ENCODE measurements at regions of chrX and their contacts with region 1.

Region 1: DNA sequence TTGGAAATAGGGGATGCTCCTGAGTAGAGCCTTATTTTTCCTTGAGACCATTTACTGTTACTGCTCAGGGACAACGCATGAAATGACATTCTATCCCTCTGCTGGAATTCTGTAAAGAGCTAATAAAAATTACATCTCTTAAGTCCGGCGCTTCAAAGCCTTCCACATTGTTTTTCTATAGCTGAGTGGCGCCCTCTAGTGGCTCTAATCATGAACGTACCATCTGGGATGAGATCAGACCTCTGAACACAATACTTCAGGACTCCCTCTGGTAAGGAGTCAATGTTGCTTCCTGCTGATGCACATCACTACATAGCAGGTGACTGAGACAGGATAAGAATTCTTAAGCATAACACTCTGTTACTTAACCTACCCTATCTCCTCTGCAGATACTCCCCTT is 6.0 kb downstream of the HMGN5 start:
- DNase-seq: peak; percentile 27
- ATAC-seq: peak; percentile 87
- H3K4me3 ChIP-seq: no peak overlapping the region
- H3K27ac ChIP-seq: no peak overlapping the region
- H3K4me1 ChIP-seq: no peaks in the 10 kb centered on the region
- H3K27me3 ChIP-seq: no peaks in the 10 kb centered on the region
- CTCF ChIP-seq: peak; percentile 57
- EP300 ChIP-seq: no peak
- POLR2A ChIP-seq: no peak
- RAD21 ChIP-seq: no peak

Region 2: GRCh38 chrX:80556148-80556547 is 639.6 kb before region 1 on chrX:
- CTCF ChIA-PET with region 1: no interaction called
- POLR2A ChIA-PET with region 1: no interaction called
- in situ Hi-C with region 1: no loop called
- intact Hi-C with region 1: no loop called
- DNase-seq: no peak
- ATAC-seq: no peak
- H3K4me3 ChIP-seq: no peak overlapping the region
- H3K27ac ChIP-seq: no peak overlapping the region
- H3K4me1 ChIP-seq: no peaks in the 10 kb centered on the region
- H3K27me3 ChIP-seq: no peaks in the 10 kb centered on the region
- CTCF ChIP-seq: no peak
- EP300 ChIP-seq: no peak
- POLR2A ChIP-seq: no peak
- RAD21 ChIP-seq: no peak

Region 3: DNA sequence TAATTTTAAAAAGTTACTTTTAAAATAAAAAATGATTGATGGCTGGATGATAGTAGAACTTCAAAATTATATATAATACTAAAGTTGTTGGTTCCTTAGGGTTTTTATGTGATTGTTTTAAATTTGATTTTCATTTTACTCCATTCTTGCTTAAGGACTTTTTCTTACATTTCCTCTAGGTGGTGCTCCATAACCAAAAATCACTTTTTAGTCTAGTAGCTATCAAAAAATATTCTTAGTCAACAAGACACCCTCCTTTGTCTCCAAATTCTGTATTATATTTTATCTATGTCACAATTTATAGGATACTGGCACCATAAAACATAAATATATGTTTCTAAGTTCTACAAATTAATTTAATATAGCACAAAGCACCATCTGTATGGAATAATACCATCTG is 318.8 kb before region 1 on chrX:
- CTCF ChIA-PET with region 1: no interaction called
- POLR2A ChIA-PET with region 1: no interaction called
- in situ Hi-C with region 1: no loop called
- intact Hi-C with region 1: loop called (anchors 5 kb)
- DNase-seq: peak; percentile 7
- ATAC-seq: no peak
- H3K4me3 ChIP-seq: no peak overlapping the region
- H3K27ac ChIP-seq: no peak overlapping the region
- H3K4me1 ChIP-seq: no peaks in the 10 kb centered on the region
- H3K27me3 ChIP-seq: no peaks in the 10 kb centered on the region
- CTCF ChIP-seq: no peak
- EP300 ChIP-seq: no peak
- POLR2A ChIP-seq: no peak
- RAD21 ChIP-seq: no peak